ENCODE measurements at regions of chr11 and their contacts with region 1.

Region 1: DNA sequence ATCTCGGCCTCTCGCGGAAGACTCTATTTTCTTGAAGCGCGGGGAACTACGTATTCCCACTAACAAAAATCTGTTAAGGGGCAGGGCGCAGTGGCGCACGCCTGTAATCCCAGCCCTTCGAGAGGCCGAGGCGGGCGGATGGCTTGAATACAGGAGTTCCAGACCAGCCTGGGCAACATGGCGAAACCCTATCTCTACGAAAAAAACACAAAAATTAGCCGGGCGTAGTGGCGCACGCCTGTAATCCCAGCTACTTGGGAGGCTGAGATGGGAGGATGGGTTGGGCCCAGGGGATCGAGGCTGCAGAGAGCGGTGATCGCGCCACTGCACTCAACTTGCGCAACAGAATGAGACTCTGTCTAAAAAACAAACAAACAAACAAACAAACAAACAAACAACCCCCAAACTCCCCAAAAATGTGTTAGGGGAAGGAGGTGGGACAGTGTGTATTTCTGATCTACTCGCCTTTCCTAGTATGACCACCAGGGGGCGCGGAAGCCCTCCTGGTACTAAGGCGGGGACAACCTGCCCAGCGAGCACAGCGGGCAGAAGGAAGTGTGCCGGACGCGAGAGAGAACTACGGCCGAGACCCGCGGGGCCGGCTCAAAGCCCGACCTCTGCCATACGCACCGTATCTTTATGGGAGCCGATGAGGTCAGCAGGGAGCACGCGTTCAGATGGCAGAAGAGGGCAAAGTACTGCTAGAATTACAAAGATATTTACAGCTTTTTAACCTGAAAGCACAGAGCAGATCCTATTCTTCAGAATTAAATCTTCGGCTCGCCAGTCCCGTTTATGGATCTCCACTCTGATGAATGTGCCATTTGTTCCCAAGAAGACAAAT is 1.3 kb upstream of the STX3 start:
- DNase-seq: peak; percentile 63
- ATAC-seq: peak; percentile 65
- H3K4me3 ChIP-seq: peak overlapping the region; percentile 83
- H3K27ac ChIP-seq: no peak overlapping the region
- H3K4me1 ChIP-seq: peaks cover 5% of the 10 kb centered on the region
- H3K27me3 ChIP-seq: no peaks in the 10 kb centered on the region
- CTCF ChIP-seq: peak; percentile 90
- POLR2A ChIP-seq: no peak
- RAD21 ChIP-seq: peak; percentile 75

Region 2: DNA sequence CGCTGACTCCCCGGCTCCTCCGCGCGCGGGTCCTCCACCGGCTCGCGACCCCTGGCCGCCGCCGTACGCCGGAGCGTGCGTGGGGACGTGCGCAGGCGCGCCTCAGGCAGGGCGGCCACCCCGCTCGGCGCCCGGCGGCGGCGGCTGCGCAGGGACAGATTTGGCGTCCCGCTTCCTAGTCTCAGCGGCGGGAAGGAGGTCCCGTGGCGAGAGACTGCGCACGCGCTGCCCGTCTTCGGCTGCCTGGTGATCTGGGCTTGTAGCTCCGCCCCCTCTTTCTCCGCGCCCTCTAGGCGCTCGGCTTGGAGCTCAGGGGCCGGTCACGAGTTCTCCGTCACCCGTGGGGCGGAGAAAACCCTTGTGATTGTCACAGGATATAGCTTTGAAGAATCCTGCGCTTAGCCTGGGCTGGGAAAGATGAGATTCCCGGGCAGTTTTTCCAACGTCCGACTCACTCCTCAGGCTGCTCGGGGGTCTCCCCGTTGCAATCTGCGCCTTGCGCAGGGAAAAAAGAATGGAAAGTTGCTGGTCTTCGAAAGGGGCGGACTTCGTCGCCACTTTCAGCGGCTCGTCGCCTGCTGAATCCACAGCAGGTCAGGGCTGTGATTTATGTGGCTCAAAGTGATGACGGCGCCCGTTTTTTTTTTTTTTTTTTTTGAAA is 84.8 kb before region 1 on chr11 and contains the start of gene PATL1:
- CTCF ChIA-PET with region 1: no interaction called
- POLR2A ChIA-PET with region 1: no interaction called
- dilution Hi-C with region 1: no loop called
- in situ Hi-C with region 1: no loop called
- intact Hi-C with region 1: loop called (anchors 2 kb)
- DNase-seq: peak; percentile 98
- ATAC-seq: peak; percentile 95
- H3K4me3 ChIP-seq: peak within 1 kb of the TSS; percentile 97
- H3K27ac ChIP-seq: peak within 1 kb of the TSS; percentile 93
- H3K4me1 ChIP-seq: peaks cover 3% of the 10 kb centered on the region; the same call in 1 of the 2 replicates
- H3K27me3 ChIP-seq: no peaks in the 10 kb centered on the region
- CTCF ChIP-seq: 0 out of 2 replicates have a peak, but pooled peaks have one; percentile 9
- POLR2A ChIP-seq: peak; percentile 67
- RAD21 ChIP-seq: no peak
- total RNA-seq, gene PATL1: 3.9 and 4.4 TPM in 2 replicates

Region 3: DNA sequence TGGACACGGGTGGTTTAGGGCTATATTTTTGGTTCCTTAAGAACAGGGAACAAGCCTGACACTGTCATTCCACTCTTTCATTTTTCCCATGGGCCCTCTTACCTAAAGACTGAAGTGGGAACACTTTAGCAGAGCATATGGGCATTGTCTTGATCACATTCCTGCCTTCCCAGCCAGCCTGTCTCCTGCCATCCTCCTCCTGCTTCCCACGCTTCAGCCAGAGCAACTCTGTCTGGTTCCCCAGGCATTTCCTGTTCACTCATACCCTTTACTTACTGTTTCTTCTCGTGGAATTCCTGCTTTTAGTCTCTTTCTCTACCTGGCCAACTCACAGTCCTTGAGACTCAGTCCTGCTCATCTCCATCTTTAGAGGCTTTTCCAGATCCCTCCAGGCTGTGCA is 33.9 kb after region 1 on chr11:
- CTCF ChIA-PET with region 1: interaction called, 4 read pairs
- POLR2A ChIA-PET with region 1: no interaction called
- dilution Hi-C with region 1: no loop called
- in situ Hi-C with region 1: no loop called
- intact Hi-C with region 1: loop called (anchors 1 kb)
- DNase-seq: peak; percentile 73
- ATAC-seq: peak; percentile 63
- H3K4me3 ChIP-seq: no peak overlapping the region
- H3K27ac ChIP-seq: no peak overlapping the region
- H3K4me1 ChIP-seq: peaks cover 6% of the 10 kb centered on the region
- H3K27me3 ChIP-seq: no peaks in the 10 kb centered on the region
- CTCF ChIP-seq: no peak
- POLR2A ChIP-seq: no peak
- RAD21 ChIP-seq: no peak

Region 4: GRCh38 chr11:59810189-59810910 is 56.5 kb after region 1 on chr11 and contains the start of gene MRPL16:
- CTCF ChIA-PET with region 1: no interaction called
- POLR2A ChIA-PET with region 1: no interaction called
- dilution Hi-C with region 1: no loop called
- in situ Hi-C with region 1: no loop called
- intact Hi-C with region 1: loop called (anchors 2 kb)
- DNase-seq: peak; percentile 85
- ATAC-seq: peak; percentile 98
- H3K4me3 ChIP-seq: peak within 1 kb of the TSS; percentile 98
- H3K27ac ChIP-seq: peak within 1 kb of the TSS; percentile 85
- H3K4me1 ChIP-seq: peaks cover 3% of the 10 kb centered on the region; the same call in 1 of the 2 replicates
- H3K27me3 ChIP-seq: no peaks in the 10 kb centered on the region
- CTCF ChIP-seq: no peak
- POLR2A ChIP-seq: no peak
- RAD21 ChIP-seq: no peak; the same call in 1 of the 2 replicates
- total RNA-seq, gene MRPL16: 43.9 and 56.9 TPM in 2 replicates